Ascending aorta (tissue), 2 donors: ENCODE measurements at regions of chr20 and their contacts with region 1.

Region 1: DNA sequence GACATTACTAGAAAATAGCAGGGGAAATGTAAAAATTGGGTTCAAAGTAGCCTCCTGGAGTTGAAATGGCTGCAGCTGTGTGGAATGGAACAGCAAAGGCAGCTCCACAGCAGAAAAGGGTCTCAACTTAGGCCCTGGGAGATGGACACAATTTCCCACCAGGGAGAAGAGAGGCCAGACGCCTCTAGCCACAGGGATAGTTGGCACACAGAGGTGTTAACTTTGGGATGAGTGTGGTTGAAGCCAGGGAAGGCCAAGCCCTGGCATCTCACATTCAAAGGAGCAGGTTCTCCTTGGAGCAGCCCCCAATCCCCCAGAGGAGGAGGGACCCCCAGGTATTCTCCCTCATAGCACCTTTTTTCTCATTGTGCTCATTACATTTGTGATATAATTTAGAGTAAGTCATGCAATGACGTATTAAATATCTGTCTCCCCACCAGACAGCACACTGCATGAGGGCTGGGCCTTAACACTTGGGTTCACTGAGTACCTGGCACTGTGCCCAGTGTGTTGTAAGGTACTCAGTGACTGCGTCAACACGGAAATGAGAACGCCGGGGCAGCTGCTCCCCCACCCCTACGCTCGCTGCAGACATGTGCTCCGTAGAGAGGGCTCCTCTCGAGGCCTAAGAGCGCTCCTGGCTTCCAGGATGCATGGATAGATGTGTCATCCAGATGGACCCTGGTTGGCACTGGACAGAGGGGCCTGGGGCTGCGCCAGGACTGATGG is 76.0 kb upstream of the CD93 start:
- DNase-seq: peak; percentile 73 to 91
- H3K4me3 ChIP-seq: no peak overlapping the region
- H3K27ac ChIP-seq: peak overlapping the region; percentile 93 to 96
- H3K4me1 ChIP-seq: peaks cover 9 to 55% of the 10 kb centered on the region in 2 donors
- H3K27me3 ChIP-seq: no peaks in the 10 kb centered on the region
- CTCF ChIP-seq: no peak

Region 2: GRCh38 chr20:22775671-22776139 is 386.4 kb before region 1 on chr20:
- intact Hi-C with region 1: no loop called
- DNase-seq: no peak
- H3K4me3 ChIP-seq: no peak overlapping the region
- H3K27ac ChIP-seq: no peak overlapping the region
- H3K4me1 ChIP-seq: no peaks in the 10 kb centered on the region
- H3K27me3 ChIP-seq: no peaks in the 10 kb centered on the region
- CTCF ChIP-seq: no peak

Region 3: GRCh38 chr20:23205611-23206041 is 43.5 kb after region 1 on chr20:
- intact Hi-C with region 1: loop called (anchors 5 kb)
- DNase-seq: peak; percentile 44 to 88
- H3K4me3 ChIP-seq: no peak overlapping the region
- H3K27ac ChIP-seq: peak overlapping the region; percentile 75 to 92
- H3K4me1 ChIP-seq: peaks cover 0 to 22% of the 10 kb centered on the region in 2 donors
- H3K27me3 ChIP-seq: no peaks in the 10 kb centered on the region
- CTCF ChIP-seq: no peak

Region 4: DNA sequence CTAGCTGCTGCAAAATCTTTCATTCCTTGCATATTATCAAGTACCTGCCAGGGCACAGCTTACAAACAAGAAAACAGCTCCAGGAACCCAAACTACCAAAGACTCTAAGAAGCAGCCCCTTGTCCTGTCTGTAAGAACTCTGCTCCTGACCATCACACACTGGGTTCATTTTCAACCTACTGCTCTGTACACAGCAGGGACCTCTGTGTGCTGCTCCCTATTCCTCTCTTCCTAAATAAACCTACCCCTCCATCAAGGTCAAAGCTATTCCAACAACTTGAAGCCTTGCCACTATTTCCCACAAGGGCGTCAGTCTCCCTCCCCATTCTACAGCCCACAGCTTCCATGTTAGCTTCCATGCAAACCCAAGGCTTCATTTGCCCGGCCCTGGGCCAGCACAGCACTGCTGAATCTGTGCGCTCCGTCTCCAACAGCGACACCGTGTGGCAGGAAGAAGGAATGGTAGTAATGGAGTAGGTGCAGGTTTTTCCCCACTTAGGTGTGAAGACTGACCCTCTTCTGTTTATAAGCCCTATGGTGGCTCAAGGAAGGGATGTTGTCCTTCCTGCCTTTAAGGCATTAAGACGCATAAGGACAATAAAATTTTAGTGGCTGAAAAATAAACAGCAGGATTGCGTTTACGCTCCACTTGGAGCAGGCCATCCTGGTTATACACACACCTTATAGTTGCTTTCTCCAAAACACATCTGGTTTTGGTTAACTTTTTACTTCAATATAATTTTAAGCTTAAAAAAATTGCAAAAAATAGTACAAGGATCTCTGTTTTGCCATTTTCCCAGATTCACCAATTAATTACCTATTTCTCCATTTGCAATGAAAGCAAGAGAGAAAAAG is 73.3 kb after region 1 on chr20:
- intact Hi-C with region 1: loop called (anchors 5 kb)
- DNase-seq: peak in 1 of 2 donors; percentile 84
- H3K4me3 ChIP-seq: no peak overlapping the region
- H3K27ac ChIP-seq: no peak overlapping the region
- H3K4me1 ChIP-seq: no peaks in the 10 kb centered on the region
- H3K27me3 ChIP-seq: no peaks in the 10 kb centered on the region
- CTCF ChIP-seq: peak; percentile 67 to 86 (median 84)